ENCODE measurements at regions of chr6 and their contacts with region 1.

Region 1: DNA sequence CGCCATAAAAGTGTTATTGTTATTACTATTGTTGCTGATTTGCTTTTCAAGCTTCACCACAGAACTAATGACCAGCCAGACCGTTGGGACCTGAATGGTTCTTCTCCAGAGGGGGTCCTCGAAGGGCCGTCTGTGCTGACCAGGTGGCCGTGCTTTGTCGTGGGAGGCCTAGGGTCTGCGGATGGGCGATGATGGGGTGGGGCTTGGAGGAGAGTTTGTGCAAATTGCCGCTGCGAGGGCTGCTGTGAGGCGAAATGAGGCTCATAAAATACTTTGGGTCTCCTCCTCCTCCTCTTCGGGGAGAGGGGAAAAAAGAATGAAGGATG is 6.0 kb upstream of the ZBTB22 start:
- DNase-seq: no peak
- ATAC-seq: peak in 1 of 2 donors; percentile 1
- H3K4me3 ChIP-seq: peak overlapping the region; percentile 61 to 88 (median 78)
- H3K27ac ChIP-seq: peak overlapping the region; percentile 84 to 95 (median 90)
- H3K4me1 ChIP-seq: peaks cover 30 to 39% of the 10 kb centered on the region in 2 donors
- H3K27me3 ChIP-seq: no peaks in the 10 kb centered on the region
- CTCF ChIP-seq: no peak
- POLR2A ChIP-seq: no peak

Region 2: GRCh38 chr6:33410050-33410710 is 86.6 kb after region 1 on chr6:
- in situ Hi-C with region 1: no loop called
- intact Hi-C with region 1: loop called (anchors 1 kb)
- DNase-seq: peak; percentile 96 to 97
- ATAC-seq: peak; percentile 87 to 88
- H3K4me3 ChIP-seq: peak overlapping the region; percentile 70 to 100 (median 98)
- H3K27ac ChIP-seq: peak overlapping the region; percentile 99 to 100 (median 99)
- H3K4me1 ChIP-seq: peaks cover 9 to 18% of the 10 kb centered on the region in 2 donors
- H3K27me3 ChIP-seq: no peaks in the 10 kb centered on the region
- CTCF ChIP-seq: no peak
- POLR2A ChIP-seq: peak; percentile 54 to 73

Region 3: GRCh38 chr6:33445119-33445603 is 121.6 kb after region 1 on chr6:
- in situ Hi-C with region 1: no loop called
- intact Hi-C with region 1: no loop called
- DNase-seq: no peak
- ATAC-seq: no peak
- H3K4me3 ChIP-seq: no peak overlapping the region
- H3K27ac ChIP-seq: no peak overlapping the region
- H3K4me1 ChIP-seq: no peaks in the 10 kb centered on the region
- H3K27me3 ChIP-seq: no peaks in the 10 kb centered on the region
- CTCF ChIP-seq: no peak
- POLR2A ChIP-seq: no peak